Panc1 (cell line): ENCODE measurements at regions of chr17 and their contacts with region 1.

Region 1: DNA sequence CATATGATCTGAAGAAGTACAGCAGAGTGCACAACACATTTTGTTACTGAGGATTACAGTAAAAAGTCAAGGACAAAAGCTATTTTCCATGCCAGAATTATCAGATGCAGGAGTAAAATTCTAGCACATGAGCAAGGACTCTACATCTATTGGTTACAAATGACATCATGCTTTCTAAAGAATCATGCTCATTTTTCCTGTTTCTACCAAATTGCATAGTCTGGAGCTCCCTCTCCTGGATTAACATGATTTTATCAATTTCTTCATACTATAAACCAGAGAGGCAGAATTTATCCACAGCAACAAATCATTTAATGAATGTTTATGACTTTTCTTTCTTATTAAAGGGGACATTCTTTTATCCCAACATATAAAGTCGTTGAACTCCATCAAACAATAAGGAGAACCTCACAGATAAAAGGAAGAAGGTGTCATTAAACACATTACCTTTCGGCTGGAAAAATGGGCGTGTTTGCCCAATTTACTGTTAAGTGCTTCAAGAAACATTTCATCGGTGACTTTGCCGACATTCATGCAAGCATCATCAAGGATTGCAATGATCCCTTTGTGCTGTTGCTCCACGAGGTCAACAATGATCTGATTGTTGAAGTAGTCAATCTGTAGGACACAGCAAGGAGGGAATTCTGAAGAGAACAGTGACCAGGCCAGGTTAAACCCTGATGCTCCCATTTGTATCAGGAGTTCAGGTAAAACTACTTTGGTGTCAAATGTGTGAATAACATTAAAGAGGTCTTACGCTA is 121.7 kb downstream of the MYO1D start:
- DNase-seq: peak; percentile 28
- ATAC-seq: peak; percentile 81
- H3K4me3 ChIP-seq: no peak overlapping the region
- H3K27ac ChIP-seq: no peak overlapping the region
- H3K4me1 ChIP-seq: no peaks in the 10 kb centered on the region
- H3K27me3 ChIP-seq: peaks cover 6% of the 10 kb centered on the region
- CTCF ChIP-seq: peak; percentile 52; the same call in 1 of the 2 replicates

Region 2: GRCh38 chr17:32483451-32484019 is 271.7 kb before region 1 on chr17:
- CTCF ChIA-PET with region 1: no interaction called
- POLR2A ChIA-PET with region 1: no interaction called
- in situ Hi-C with region 1: no loop called
- intact Hi-C with region 1: loop called (anchors 5 kb)
- DNase-seq: peak; percentile 60
- ATAC-seq: peak; percentile 16; the same call in 1 of the 2 replicates
- H3K4me3 ChIP-seq: no peak overlapping the region
- H3K27ac ChIP-seq: no peak overlapping the region
- H3K4me1 ChIP-seq: peaks cover 20% of the 10 kb centered on the region
- H3K27me3 ChIP-seq: no peaks in the 10 kb centered on the region
- CTCF ChIP-seq: peak; percentile 74; the same call in 1 of the 2 replicates

Region 3: DNA sequence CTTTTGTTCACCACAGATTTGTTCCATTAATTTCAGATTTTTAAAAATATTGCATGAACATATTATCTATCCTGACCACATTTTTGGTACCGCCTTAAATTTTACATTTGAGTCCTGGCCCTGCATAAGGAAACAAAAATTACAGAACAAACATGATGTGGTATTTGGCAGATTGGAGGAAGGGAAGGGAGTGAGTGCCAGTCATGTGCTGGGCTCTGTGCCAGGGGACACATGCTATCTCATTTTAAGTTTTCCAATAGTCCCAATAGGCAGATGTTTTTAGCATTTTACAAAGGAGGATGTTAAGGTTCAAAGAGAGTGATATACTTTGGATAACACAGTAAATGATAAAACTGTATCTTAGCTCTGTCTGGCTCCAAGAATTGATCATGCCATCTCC is 83.3 kb before region 1 on chr17:
- CTCF ChIA-PET with region 1: no interaction called
- POLR2A ChIA-PET with region 1: no interaction called
- in situ Hi-C with region 1: no loop called
- intact Hi-C with region 1: loop called (anchors 1 kb)
- DNase-seq: no peak
- ATAC-seq: no peak
- H3K4me3 ChIP-seq: no peak overlapping the region
- H3K27ac ChIP-seq: no peak overlapping the region
- H3K4me1 ChIP-seq: no peaks in the 10 kb centered on the region
- H3K27me3 ChIP-seq: peaks cover 6% of the 10 kb centered on the region
- CTCF ChIP-seq: no peak

Region 4: GRCh38 chr17:32783602-32784001 is 28.4 kb after region 1 on chr17:
- CTCF ChIA-PET with region 1: no interaction called
- POLR2A ChIA-PET with region 1: no interaction called
- in situ Hi-C with region 1: no loop called
- intact Hi-C with region 1: no loop called
- DNase-seq: peak; percentile 36
- ATAC-seq: peak; percentile 88
- H3K4me3 ChIP-seq: no peak overlapping the region
- H3K27ac ChIP-seq: no peak overlapping the region
- H3K4me1 ChIP-seq: no peaks in the 10 kb centered on the region
- H3K27me3 ChIP-seq: peaks cover 5% of the 10 kb centered on the region
- CTCF ChIP-seq: peak; percentile 69; the same call in 1 of the 2 replicates

Region 5: DNA sequence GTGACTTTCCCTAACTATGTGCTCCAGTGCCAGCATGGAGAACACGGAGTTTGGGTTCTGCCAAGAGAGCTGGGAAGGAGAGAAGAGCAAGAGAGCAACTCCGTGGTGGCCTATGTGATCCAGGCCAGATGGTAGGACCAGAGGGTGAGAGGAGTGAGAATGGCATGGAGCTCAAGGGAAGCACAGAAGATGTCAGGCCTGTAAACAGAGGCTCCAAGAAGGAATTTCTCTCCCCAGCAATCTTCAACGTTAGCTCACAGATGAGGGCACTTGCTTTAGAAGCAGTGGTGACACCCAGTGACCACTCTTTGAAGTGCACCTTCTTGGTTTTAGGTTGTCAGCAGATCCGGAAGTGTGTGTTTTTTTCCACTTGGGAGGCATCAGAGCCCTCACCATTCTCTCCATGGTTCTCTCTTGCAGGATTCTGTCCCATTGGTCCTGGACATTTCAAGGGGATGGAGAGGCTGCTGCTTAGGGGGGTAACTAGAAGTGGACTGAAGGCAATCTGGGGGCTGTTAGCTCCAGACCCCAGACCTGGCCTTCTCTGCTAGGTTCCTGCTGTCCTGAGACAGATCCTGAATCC is 154.7 kb after region 1 on chr17:
- CTCF ChIA-PET with region 1: no interaction called
- POLR2A ChIA-PET with region 1: no interaction called
- in situ Hi-C with region 1: no loop called
- intact Hi-C with region 1: no loop called
- DNase-seq: peak; percentile 41
- ATAC-seq: peak; percentile 90
- H3K4me3 ChIP-seq: no peak overlapping the region
- H3K27ac ChIP-seq: no peak overlapping the region
- H3K4me1 ChIP-seq: no peaks in the 10 kb centered on the region
- H3K27me3 ChIP-seq: peaks cover 12% of the 10 kb centered on the region; the same call in 1 of the 2 replicates
- CTCF ChIP-seq: peak; percentile 74